Panc1 (cell line): ENCODE measurements at regions of chr5 and their contacts with region 1.

Region 1: GRCh38 chr5:166211640-166212039 is 2079.8 kb upstream of the WWC1 start:
- DNase-seq: no peak
- ATAC-seq: no peak
- H3K4me3 ChIP-seq: no peak overlapping the region
- H3K27ac ChIP-seq: no peak overlapping the region
- H3K4me1 ChIP-seq: no peaks in the 10 kb centered on the region
- H3K27me3 ChIP-seq: no peaks in the 10 kb centered on the region
- CTCF ChIP-seq: no peak

Region 2: GRCh38 chr5:164581889-164582288 is 1629.8 kb before region 1 on chr5:
- CTCF ChIA-PET with region 1: no interaction called
- POLR2A ChIA-PET with region 1: interaction called, 12 read pairs
- in situ Hi-C with region 1: no loop called
- intact Hi-C with region 1: no loop called
- DNase-seq: no peak
- ATAC-seq: no peak
- H3K4me3 ChIP-seq: no peak overlapping the region
- H3K27ac ChIP-seq: no peak overlapping the region
- H3K4me1 ChIP-seq: no peaks in the 10 kb centered on the region
- H3K27me3 ChIP-seq: no peaks in the 10 kb centered on the region
- CTCF ChIP-seq: no peak

Region 3: DNA sequence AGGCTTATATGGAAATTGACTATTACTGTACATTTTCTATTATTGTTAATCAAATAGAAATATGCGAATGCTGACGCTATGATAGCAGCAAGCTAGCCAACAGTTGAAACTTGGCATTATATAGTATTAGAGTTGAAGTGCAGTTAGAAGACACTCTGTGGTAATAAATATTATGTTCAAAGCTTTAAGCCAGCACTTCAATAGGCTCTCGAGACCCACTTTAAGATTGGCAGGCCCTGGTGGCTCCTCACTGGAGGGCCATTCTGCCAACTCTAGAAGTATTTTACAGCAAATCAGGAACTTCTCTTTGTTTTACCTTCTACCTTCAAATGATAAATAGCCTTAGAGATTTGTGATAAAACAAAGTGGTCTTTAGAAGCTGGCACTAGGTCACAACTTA is 50.8 kb after region 1 on chr5:
- CTCF ChIA-PET with region 1: no interaction called
- POLR2A ChIA-PET with region 1: no interaction called
- in situ Hi-C with region 1: no loop called
- intact Hi-C with region 1: no loop called
- DNase-seq: no peak
- ATAC-seq: no peak
- H3K4me3 ChIP-seq: no peak overlapping the region
- H3K27ac ChIP-seq: no peak overlapping the region
- H3K4me1 ChIP-seq: no peaks in the 10 kb centered on the region
- H3K27me3 ChIP-seq: no peaks in the 10 kb centered on the region
- CTCF ChIP-seq: no peak